Cardiac septum (tissue), 1 donor: ENCODE measurements at regions of chr15 and their contacts with region 1.

Region 1: DNA sequence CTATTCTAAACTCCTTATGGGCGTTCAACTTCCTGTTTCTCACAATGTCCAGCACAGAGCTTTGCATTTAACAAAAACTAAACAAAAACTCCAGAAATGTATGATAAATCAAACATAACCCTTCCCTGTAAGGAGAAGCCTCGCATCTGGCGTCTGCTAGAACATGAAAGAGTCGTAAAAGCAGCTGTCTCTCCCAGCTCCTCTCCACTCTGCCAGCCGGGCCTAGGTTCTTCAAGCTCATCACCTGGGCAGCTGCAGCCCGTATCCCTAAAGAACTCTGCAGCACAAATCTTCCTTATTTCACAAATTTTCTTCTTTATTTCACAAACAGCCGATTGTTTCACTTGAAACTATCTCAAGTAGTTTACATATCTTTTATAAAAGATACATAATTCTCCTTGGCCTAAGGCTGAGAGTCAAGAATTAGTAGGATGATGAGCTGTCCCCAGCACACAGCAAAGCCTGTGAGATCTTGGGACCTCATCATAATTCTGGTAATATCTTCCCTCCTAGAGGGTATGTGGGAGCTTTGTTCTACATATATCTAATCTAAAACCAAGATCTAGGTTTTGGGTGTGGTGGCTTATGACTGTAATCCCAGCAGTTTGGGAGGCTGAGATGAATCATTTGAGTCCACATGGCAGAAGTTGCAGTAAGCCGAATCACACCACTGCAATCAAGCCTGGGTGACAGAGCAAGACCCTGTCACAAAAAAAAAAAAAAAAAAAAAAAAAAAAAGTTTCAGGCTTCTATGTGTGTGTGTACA is 35.3 kb downstream of the ANXA2 start:
- DNase-seq: no peak

Region 2: GRCh38 chr15:60444289-60444912 is 81.9 kb after region 1 on chr15:
- intact Hi-C with region 1: loop called (anchors 2 kb)
- DNase-seq: no peak

Region 3: GRCh38 chr15:60614862-60615771 is 252.6 kb after region 1 on chr15:
- intact Hi-C with region 1: no loop called
- DNase-seq: no peak